Mammary epithelial cell (primary cell): ENCODE measurements at regions of chr2 and their contacts with region 1.

Region 1: DNA sequence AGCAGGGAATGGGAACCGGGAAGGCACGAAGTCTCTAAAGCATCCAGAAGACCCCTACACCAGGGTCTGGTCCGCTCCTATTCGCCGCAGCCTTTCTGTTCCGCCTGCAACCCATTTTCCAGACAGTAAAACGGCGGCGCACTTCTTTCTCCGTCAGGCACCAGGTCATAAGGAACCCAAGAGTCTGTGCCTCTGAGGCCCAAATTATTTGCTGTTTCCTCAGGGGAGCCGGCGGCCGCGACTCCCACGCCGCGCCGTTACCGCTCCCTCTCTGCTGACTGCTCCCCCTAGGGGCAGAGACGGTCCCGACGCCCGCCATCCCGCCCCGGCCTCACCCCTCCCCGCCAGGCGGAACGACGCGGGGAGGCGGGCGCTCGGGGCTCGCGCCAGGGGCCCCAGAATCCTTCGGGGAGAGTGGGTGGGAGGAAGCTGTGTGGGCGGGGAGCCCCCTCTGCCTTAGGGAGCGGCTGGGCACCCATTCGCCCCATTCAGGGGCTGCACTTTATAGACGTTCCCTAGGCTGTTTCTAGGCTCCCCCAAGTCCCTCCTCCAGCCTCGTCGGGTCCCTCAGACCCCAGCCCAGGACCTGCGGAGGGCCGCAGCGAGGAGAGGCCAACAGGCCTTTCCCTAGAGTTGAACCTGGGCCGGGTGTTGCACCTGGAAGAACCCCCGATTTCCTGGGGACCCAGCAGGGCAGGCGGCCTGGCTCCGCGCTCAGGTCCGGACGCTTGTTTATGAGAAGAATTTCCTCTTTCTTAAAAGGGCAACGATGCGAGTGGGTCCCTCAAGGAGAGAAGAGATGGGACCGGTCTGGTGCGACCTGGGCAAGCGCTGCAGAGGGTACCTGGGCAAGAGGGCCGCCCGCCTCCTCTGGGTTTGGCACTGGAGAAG is 3.6 kb upstream of the CTDSP1 start:
- DNase-seq: peak; percentile 94
- H3K4me3 ChIP-seq: peak overlapping the region; percentile 58 to 71 (median 65)
- H3K27ac ChIP-seq: peak overlapping the region; percentile 76
- H3K4me1 ChIP-seq: peaks cover 32% of the 10 kb centered on the region
- H3K27me3 ChIP-seq: no peaks in the 10 kb centered on the region
- CTCF ChIP-seq: peak; percentile 49 to 80

Region 2: DNA sequence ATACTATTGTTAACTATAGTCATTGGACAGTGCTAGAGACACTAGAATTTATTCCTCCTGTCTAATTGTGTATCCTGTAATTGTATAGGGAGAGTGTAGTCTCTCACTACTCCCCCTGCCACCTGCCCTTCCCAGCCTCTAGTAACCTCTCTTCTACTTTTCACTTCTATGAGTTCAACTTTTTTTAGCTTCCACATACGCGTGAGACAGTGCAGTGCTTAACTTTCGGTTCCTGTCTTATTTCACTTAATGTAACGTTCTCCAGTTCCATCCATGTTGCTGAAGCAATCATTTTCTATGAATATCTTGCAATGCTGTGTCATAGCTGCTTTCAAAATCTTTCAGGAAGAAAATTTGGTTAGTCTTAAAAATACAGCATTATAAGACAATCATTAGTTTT is 349.8 kb before region 1 on chr2:
- CTCF ChIA-PET with region 1: no interaction called
- dilution Hi-C with region 1: no loop called
- in situ Hi-C with region 1: no loop called
- intact Hi-C with region 1: no loop called
- DNase-seq: no peak
- H3K4me3 ChIP-seq: no peak overlapping the region
- H3K27ac ChIP-seq: no peak overlapping the region
- H3K4me1 ChIP-seq: no peaks in the 10 kb centered on the region
- H3K27me3 ChIP-seq: peaks cover 17% of the 10 kb centered on the region
- CTCF ChIP-seq: no peak

Region 3: GRCh38 chr2:218269899-218270720 is 125.9 kb before region 1 on chr2 and contains the starts of genes AAMP and PNKD:
- CTCF ChIA-PET with region 1: interaction called, 8 read pairs
- dilution Hi-C with region 1: no loop called
- in situ Hi-C with region 1: loop called in 1 of 2 experiments (anchors 10 kb)
- intact Hi-C with region 1: loop called (anchors 1 kb)
- DNase-seq: peak; percentile 100
- H3K4me3 ChIP-seq: peak within 1 kb of the TSS; percentile 72 to 91 (median 81)
- H3K27ac ChIP-seq: peak within 1 kb of the TSS; percentile 62
- H3K4me1 ChIP-seq: peaks cover 17% of the 10 kb centered on the region
- H3K27me3 ChIP-seq: no peaks in the 10 kb centered on the region
- CTCF ChIP-seq: peak in 1 of 2 donors; percentile 36
- total RNA-seq, gene AAMP: 80.2 to 87.6 TPM
- total RNA-seq, gene PNKD: 15.7 to 29.8 TPM

Region 4: GRCh38 chr2:218295029-218295428 is 101.0 kb before region 1 on chr2:
- CTCF ChIA-PET with region 1: interaction called, 4 read pairs
- dilution Hi-C with region 1: loop called (anchors 5 kb)
- in situ Hi-C with region 1: loop called (anchors 5 to 10 kb)
- intact Hi-C with region 1: no loop called
- DNase-seq: peak; percentile 67
- H3K4me3 ChIP-seq: no peak overlapping the region
- H3K27ac ChIP-seq: peak overlapping the region; percentile 76
- H3K4me1 ChIP-seq: peaks cover 69% of the 10 kb centered on the region
- H3K27me3 ChIP-seq: no peaks in the 10 kb centered on the region
- CTCF ChIP-seq: no peak

Region 5: GRCh38 chr2:218329027-218329825 is 66.8 kb before region 1 on chr2:
- CTCF ChIA-PET with region 1: no interaction called
- dilution Hi-C with region 1: loop called (anchors 5 kb)
- in situ Hi-C with region 1: no loop called
- intact Hi-C with region 1: no loop called
- DNase-seq: no peak
- H3K4me3 ChIP-seq: no peak overlapping the region
- H3K27ac ChIP-seq: no peak overlapping the region
- H3K4me1 ChIP-seq: peaks cover 2% of the 10 kb centered on the region
- H3K27me3 ChIP-seq: no peaks in the 10 kb centered on the region
- CTCF ChIP-seq: no peak